CD4-positive, alpha-beta memory T cell (primary cell): ENCODE measurements at regions of chr3 and their contacts with region 1.

Region 1: GRCh38 chr3:59857589-59858346 is 807.9 kb upstream of the CFAP20DC start:
- DNase-seq: peak; percentile 63 to 72 (median 67)
- H3K4me3 ChIP-seq: no peak overlapping the region
- H3K4me3 Mint-ChIP-seq: peak overlapping the region in 5 of 8 donors; percentile 15 to 72 (median 25)
- H3K27ac ChIP-seq: no peak overlapping the region
- H3K27ac Mint-ChIP-seq: peak overlapping the region in 1 of 7 donors; percentile 37
- H3K4me1 ChIP-seq: no peaks in the 10 kb centered on the region
- H3K4me1 Mint-ChIP-seq: peaks cover 6 to 11% (median 7%) of the 10 kb centered on the region in 4 donors
- H3K27me3 ChIP-seq: no peaks in the 10 kb centered on the region
- H3K27me3 Mint-ChIP-seq: no peaks in the 10 kb centered on the region

Region 2: DNA sequence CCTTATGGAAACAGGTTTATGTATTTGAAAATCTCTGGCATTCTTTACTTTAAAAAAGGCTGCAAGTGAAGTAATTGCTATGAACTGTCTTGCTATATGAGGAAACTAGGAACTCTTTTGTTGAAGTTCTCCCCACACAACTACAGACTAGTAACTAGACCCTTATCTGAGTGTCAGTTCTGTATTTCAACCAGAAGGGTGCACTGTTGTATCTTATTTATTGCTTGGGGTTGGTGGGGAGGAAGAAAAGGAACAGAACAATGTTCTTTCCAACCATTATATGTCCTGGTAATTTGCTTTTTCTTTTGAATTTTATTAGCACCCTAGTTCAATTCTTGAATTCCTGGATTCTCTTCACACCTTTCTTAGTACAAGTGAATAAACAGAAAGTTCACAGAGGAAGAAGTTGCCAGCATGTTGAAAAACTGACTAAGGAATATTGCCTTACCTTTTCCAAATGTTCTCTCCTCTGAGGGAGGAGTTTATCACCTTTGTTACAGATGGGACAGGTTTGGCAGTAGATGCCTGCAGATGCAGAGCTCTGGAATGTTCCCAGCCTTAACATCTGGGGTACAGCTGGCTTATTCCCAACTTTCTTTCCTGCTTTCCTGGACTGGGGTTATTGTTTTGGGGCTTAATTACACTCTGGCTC is 645.5 kb before region 1 on chr3:
- CTCF ChIA-PET with region 1: interaction called, 26 read pairs
- POLR2A ChIA-PET with region 1: no interaction called
- intact Hi-C with region 1: loop called (anchors 1 kb)
- DNase-seq: peak in 4 of 5 donors; percentile 40 to 48 (median 42)
- H3K4me3 ChIP-seq: no peak overlapping the region
- H3K4me3 Mint-ChIP-seq: no peak overlapping the region
- H3K27ac ChIP-seq: no peak overlapping the region
- H3K27ac Mint-ChIP-seq: peak overlapping the region in 1 of 7 donors; percentile 38
- H3K4me1 ChIP-seq: no peaks in the 10 kb centered on the region
- H3K4me1 Mint-ChIP-seq: peaks cover 0 to 6% (median 2%) of the 10 kb centered on the region in 4 donors
- H3K27me3 ChIP-seq: no peaks in the 10 kb centered on the region
- H3K27me3 Mint-ChIP-seq: peaks cover 4 to 5% of the 10 kb centered on the region in 2 donors

Region 3: DNA sequence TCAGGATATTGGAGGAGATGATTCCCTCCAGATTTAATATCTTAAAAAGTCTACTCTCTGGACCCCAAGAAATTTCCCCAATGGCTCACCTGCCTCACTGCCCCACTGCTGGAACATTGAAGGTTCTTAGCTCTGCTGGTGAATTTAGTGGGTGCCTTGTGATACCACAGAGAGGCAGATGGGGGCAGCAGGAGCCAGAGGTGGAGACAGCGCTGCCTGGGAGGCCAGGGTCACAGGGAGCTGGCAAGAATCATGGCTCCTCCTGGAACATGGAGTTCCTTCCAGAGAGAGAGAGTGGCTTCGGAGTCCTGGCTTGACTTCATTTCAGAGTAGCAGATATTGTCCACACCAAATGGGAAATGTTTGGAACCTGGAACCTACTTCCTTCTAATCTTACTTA is 544.4 kb before region 1 on chr3:
- CTCF ChIA-PET with region 1: interaction called, 10 read pairs
- POLR2A ChIA-PET with region 1: no interaction called
- intact Hi-C with region 1: no loop called
- DNase-seq: peak in 4 of 5 donors; percentile 12 to 22 (median 16)
- H3K4me3 ChIP-seq: no peak overlapping the region
- H3K4me3 Mint-ChIP-seq: no peak overlapping the region
- H3K27ac ChIP-seq: no peak overlapping the region
- H3K27ac Mint-ChIP-seq: no peak overlapping the region
- H3K4me1 ChIP-seq: no peaks in the 10 kb centered on the region
- H3K4me1 Mint-ChIP-seq: peaks cover 0 to 14% (median 5%) of the 10 kb centered on the region in 4 donors
- H3K27me3 ChIP-seq: no peaks in the 10 kb centered on the region
- H3K27me3 Mint-ChIP-seq: peaks cover 0 to 2% of the 10 kb centered on the region in 2 donors